ENCODE measurements at regions of chr21 and their contacts with region 1.

Region 1: GRCh38 chr21:44949779-44950198 is 10.0 kb downstream of the SLX9 start:
- DNase-seq: peak; percentile 91
- ATAC-seq: peak; percentile 74 to 75

Region 2: DNA sequence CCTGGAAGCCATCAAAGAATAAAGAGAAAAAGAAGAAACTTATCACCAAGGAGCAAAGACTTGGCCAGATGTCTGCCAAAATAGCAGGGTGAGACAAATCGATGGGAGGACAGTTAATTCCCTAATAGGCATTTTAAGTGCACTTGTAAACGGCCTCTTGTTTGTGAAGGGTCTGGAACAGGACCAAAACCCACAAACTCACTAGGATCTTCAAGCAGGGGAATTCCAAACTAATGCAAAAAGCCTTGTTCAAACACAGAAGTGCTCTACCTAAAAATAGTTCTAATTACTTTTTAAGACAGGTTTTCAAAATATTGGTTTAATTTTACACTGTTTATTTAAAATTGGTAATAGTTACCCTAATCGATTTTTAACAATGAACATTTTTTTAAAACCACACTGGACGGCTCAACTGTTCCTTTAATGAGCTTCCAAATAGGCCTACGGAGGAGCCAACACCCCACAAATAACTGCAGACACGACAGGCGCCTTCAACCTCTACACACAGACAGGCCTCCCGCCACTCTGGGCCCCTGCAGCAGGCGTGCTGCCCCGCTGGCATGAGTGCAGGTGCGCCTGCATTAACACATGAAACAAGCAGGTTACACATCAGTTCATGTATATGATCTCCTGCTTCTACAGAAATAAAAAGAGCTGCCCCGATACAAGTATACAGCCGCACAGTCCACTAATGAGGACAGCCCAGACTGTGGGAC is 164.0 kb before region 1 on chr21:
- intact Hi-C with region 1: no loop called
- DNase-seq: no peak
- ATAC-seq: no peak

Region 3: GRCh38 chr21:44911389-44912157 is 38.2 kb before region 1 on chr21:
- intact Hi-C with region 1: no loop called
- DNase-seq: peak; percentile 62
- ATAC-seq: peak; percentile 70 to 83

Region 4: GRCh38 chr21:45129189-45129923 is 179.6 kb after region 1 on chr21:
- intact Hi-C with region 1: loop called in 1 of 2 experiments (anchors 2 kb)
- DNase-seq: peak; percentile 49
- ATAC-seq: peak; percentile 69 to 81

Region 5: DNA sequence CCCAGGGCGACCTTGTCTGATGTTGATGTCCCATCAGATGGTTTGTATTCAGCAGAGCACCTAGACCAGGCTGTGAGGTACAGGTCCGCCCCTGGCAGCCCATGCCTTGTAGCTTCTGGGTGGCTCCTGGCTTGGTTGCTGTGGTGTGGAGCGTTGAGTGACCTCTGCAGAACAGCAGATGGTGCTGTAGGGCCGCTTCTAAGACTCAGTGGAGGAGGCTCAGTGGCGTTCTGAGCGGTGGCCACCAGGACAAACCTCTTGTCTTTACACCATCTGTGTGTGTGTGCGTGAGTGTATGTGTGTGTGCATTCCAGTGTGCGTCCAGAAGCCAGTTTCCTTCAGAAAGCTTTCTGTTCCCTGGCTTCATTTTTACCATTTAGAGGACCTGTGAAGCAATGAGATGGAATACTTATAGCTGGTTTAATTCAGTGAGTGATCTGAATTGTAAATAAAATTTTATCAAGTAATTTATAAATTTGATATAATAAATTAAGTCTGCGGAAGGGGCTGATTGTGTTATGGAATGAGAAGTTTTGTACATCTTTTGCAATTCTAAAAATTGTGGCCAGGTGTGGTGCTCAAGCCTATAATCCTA is 190.7 kb after region 1 on chr21:
- intact Hi-C with region 1: loop called in 1 of 2 experiments (anchors 5 kb)
- DNase-seq: peak; percentile 79
- ATAC-seq: peak; percentile 83 to 87

Measured in left cardiac atrium (tissue), 4 donors.